ENCODE measurements at regions of chr2 and their contacts with region 1.

Region 1: GRCh38 chr2:214676421-214677089 is 132.9 kb downstream of the BARD1 start:
- DNase-seq: no peak
- ATAC-seq: no peak
- H3K4me3 ChIP-seq: no peak overlapping the region
- H3K27ac ChIP-seq: no peak overlapping the region
- H3K4me1 ChIP-seq: no peaks in the 10 kb centered on the region
- H3K27me3 ChIP-seq: no peaks in the 10 kb centered on the region
- CTCF ChIP-seq: no peak
- POLR2A ChIP-seq: no peak
- RAD21 ChIP-seq: no peak

Region 2: GRCh38 chr2:214695789-214696188 is 19.2 kb after region 1 on chr2:
- CTCF ChIA-PET with region 1: no interaction called
- POLR2A ChIA-PET with region 1: no interaction called
- dilution Hi-C with region 1: no loop called
- in situ Hi-C with region 1: no loop called
- intact Hi-C with region 1: loop called (anchors 2 kb)
- DNase-seq: peak; percentile 42
- ATAC-seq: peak; percentile 29; the same call in 1 of the 2 replicates
- H3K4me3 ChIP-seq: no peak overlapping the region
- H3K27ac ChIP-seq: no peak overlapping the region
- H3K4me1 ChIP-seq: no peaks in the 10 kb centered on the region
- H3K27me3 ChIP-seq: no peaks in the 10 kb centered on the region
- CTCF ChIP-seq: no peak
- POLR2A ChIP-seq: no peak
- RAD21 ChIP-seq: no peak

Region 3: GRCh38 chr2:214706986-214707385 is 30.4 kb after region 1 on chr2:
- CTCF ChIA-PET with region 1: no interaction called
- POLR2A ChIA-PET with region 1: no interaction called
- dilution Hi-C with region 1: no loop called
- in situ Hi-C with region 1: no loop called
- intact Hi-C with region 1: no loop called
- DNase-seq: peak; percentile 43
- ATAC-seq: no peak
- H3K4me3 ChIP-seq: no peak overlapping the region
- H3K27ac ChIP-seq: no peak overlapping the region
- H3K4me1 ChIP-seq: no peaks in the 10 kb centered on the region
- H3K27me3 ChIP-seq: no peaks in the 10 kb centered on the region
- CTCF ChIP-seq: no peak
- POLR2A ChIP-seq: no peak
- RAD21 ChIP-seq: no peak

Region 4: GRCh38 chr2:214716811-214717560 is 40.4 kb after region 1 on chr2:
- CTCF ChIA-PET with region 1: no interaction called
- POLR2A ChIA-PET with region 1: no interaction called
- dilution Hi-C with region 1: no loop called
- in situ Hi-C with region 1: no loop called
- intact Hi-C with region 1: no loop called
- DNase-seq: no peak
- ATAC-seq: no peak
- H3K4me3 ChIP-seq: no peak overlapping the region
- H3K27ac ChIP-seq: no peak overlapping the region
- H3K4me1 ChIP-seq: no peaks in the 10 kb centered on the region
- H3K27me3 ChIP-seq: no peaks in the 10 kb centered on the region
- CTCF ChIP-seq: no peak
- POLR2A ChIP-seq: no peak
- RAD21 ChIP-seq: no peak